A673 (cell line): ENCODE measurements at regions of chr11 and their contacts with region 1.

Region 1: DNA sequence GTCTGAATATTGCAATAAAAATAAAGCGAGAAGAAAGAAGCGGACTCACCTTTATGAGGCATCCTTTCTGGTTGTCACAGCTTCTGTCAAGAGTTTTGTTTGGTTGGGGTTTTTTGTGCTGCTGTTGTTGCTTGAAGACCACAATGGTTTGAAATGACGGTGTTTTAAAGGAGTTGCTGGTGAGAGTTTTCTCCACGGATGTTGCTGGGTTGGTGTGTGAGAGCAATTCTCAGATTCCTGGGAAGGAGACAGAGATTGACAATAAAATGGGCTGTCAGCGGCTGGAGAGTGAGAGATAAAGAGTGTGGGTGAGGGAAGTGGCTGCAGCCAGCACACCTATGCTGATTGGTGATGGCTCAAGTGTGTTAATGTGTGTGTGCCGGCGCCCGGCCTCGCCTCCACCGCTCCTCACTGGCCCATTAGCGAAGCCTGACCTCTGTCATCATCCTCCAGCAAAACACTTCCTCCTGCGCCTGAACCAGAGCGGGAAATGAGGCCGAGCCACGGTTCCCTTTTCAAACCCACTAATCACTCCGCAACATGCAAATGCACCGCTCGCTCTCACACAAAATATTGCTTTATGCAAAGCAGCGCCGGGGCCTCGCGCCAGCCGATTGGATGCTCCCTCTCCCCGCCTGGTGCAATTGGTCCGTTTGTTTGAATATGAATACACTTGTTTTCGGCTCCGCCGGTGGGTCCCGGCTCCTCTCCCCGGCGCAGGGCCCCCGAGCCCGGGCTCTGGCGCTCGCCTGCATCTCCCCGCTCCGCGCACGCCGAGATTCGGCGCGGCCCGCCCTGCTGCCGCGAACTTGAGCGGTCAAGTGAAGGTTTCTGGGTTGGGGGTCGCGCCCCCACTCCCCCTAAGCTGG is at the start of gene PAX6:
- DNase-seq: peak; percentile 100
- H3K4me3 ChIP-seq: peak within 1 kb of the TSS; percentile 60
- H3K27ac ChIP-seq: peak within 1 kb of the TSS; percentile 79
- H3K4me1 ChIP-seq: peaks cover 67% of the 10 kb centered on the region
- H3K27me3 ChIP-seq: peaks cover 94% of the 10 kb centered on the region
- CTCF ChIP-seq: no peak
- total RNA-seq, gene PAX6: 22.4 and 33.9 TPM in 2 replicates

Region 2: DNA sequence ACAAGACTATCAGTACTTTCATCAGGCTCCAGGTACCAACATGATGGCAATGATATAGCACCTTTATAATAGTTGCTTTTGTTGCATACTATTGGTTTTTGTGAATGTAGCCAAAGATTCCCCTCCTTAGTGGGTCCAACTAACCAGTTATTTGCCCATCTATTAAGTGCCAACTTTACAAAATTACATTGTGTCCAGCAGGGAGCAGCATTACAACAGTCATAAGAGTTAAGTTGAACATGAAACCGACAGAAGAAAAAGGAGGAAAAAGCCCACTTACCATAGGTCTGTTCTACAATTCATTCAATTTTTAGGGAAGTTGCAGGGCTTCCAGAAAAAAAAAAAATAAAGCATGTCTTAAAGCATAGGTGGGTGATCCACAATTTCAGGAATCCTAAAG is 323.2 kb before region 1 on chr11:
- CTCF ChIA-PET with region 1: no interaction called
- POLR2A ChIA-PET with region 1: no interaction called
- intact Hi-C with region 1: loop called (anchors 5 kb)
- DNase-seq: peak; percentile 91
- H3K4me3 ChIP-seq: no peak overlapping the region
- H3K27ac ChIP-seq: no peak overlapping the region
- H3K4me1 ChIP-seq: peaks cover 6% of the 10 kb centered on the region
- H3K27me3 ChIP-seq: no peaks in the 10 kb centered on the region
- CTCF ChIP-seq: peak; percentile 92

Region 3: DNA sequence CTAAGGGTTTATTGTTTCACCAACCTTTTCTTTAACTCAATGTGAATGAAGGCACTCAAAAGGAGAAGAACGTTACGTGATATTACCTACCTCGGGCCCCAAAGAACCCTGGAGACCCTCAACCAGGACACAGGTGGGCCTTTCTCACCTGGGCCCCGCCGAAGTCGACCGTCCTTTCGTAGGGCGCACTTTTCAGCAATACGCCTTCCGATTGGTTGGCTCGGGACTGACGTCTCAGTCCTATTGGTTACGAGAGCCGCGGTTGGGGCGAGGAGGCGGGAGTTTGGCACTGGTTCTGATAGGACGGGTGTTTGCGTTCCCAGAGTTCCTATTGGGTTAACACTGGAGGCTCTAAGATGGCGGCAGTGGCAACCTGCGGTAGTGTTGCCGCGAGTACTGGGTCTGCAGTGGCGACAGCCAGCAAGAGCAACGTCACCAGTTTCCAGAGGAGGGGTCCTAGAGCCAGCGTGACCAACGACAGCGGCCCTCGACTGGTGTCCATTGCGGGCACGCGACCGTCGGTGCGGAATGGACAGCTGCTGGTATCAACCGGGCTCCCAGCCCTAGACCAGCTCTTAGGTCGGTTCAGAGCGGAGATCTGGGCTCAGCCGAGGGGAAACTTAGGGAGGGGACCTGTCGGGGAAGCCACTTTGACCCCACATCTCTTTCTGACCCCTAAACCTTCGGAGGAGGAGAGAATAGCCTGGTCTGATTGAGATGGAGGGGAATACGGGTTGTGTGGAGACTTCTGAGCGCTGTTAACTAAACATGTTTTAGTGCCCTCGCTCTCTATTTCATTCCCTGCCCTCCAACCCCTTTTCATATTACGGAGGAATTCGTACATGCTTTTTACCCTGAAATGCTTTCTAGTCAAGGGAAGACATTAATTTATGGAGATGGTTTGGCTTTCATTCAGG is 301.3 kb before region 1 on chr11 and contains the starts of genes ELP4 and IMMP1L:
- CTCF ChIA-PET with region 1: no interaction called
- POLR2A ChIA-PET with region 1: no interaction called
- intact Hi-C with region 1: loop called (anchors 2 kb)
- DNase-seq: peak; percentile 100
- H3K4me3 ChIP-seq: peak within 1 kb of the TSS; percentile 61
- H3K27ac ChIP-seq: peak within 1 kb of the TSS; percentile 82
- H3K4me1 ChIP-seq: peaks cover 24% of the 10 kb centered on the region
- H3K27me3 ChIP-seq: no peaks in the 10 kb centered on the region
- CTCF ChIP-seq: no peak
- total RNA-seq, gene ELP4: 49.4 and 49.7 TPM in 2 replicates
- total RNA-seq, gene IMMP1L: 88.3 and 97.3 TPM in 2 replicates

Region 4: DNA sequence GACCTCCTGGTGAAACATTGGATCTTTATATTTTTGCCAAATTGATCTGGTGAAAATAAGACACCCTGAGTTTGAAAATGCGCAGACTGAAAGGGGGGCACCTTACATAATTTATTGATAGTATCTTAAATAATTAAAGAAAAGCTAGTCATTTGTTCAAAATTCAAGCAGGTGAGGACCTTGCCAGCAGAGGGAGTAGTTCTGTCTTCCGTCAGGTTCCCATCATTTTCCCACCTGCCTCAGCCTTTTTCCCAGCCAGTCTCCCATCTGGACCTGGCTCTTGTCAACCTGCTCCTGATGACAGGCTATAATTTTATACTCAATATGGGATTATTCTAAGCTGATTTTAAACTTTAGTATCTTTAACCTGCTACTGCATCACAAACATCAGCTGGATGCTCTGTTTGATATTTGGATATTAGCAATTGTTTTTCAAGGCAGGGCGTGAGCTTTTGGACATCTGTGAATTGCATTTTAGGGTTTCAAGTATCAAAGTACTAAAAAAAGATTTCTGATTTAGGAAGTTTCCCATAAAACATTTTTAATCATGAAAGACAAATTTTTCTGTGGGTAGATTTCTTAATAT is 169.4 kb before region 1 on chr11:
- CTCF ChIA-PET with region 1: interaction called, 4 read pairs
- POLR2A ChIA-PET with region 1: no interaction called
- intact Hi-C with region 1: loop called (anchors 5 kb)
- DNase-seq: peak; percentile 74
- H3K4me3 ChIP-seq: no peak overlapping the region
- H3K27ac ChIP-seq: no peak overlapping the region
- H3K4me1 ChIP-seq: peaks cover 11% of the 10 kb centered on the region
- H3K27me3 ChIP-seq: no peaks in the 10 kb centered on the region
- CTCF ChIP-seq: peak; percentile 99

Region 5: DNA sequence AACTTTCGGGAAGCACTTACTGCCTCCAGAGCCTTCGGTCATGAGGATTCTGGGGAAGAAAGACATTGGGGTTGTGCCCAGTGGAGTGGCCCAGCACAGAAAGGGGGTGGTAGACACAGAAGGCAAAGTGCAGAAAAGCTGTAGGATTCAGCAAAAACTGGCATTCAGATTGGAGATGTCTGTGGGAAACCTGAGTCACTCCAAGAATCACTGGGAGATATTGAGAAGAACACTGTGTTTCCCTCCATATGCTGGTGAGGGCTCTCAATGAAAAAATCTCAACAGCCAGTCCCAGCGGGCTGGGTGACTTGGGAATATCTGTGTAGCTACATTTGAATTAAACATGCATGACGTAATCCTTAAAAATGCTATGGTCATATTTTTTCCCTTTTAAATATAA is 218.7 kb after region 1 on chr11:
- CTCF ChIA-PET with region 1: no interaction called
- POLR2A ChIA-PET with region 1: no interaction called
- intact Hi-C with region 1: no loop called
- DNase-seq: peak; percentile 63
- H3K4me3 ChIP-seq: no peak overlapping the region
- H3K27ac ChIP-seq: no peak overlapping the region
- H3K4me1 ChIP-seq: peaks cover 13% of the 10 kb centered on the region
- H3K27me3 ChIP-seq: peaks cover 58% of the 10 kb centered on the region
- CTCF ChIP-seq: no peak

Region 6: DNA sequence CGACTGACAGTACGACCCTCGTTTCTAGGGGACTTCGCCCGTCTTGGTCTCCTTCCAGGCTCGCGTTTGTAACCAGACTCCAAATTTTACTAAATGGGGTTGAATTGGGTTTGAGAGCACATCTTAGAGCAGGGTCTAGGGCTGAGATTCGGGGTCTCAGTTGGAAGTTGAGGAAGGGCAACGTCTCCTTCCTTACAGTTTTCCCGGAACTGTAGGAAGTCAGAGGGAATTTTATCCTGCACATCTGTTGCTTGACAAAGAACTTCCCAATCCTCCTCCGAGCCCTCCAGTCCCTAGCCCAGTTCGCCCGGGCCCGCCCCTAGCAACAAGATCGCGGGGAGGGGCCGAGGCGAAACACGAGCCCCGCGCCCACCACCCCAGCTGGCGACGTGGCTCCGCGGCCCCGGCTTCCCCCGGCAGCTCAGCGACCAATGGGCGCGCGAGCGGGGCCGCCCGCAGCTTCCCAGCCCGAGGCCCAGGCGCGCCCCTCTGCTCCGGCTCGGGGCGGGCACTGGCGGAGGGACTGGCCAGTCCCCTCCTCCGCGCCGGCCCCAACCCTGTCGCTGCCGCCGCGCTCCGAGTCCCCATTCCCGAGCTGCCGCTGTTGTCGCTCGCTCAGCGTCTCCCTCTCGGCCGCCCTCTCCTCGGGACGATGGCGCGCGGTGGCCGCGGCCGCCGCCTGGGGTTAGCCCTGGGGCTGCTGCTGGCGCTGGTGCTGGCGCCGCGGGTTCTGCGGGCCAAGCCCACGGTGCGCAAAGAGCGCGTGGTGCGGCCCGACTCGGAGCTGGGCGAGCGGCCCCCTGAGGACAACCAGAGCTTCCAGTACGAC is 279.7 kb after region 1 on chr11 and contains the start of gene RCN1:
- CTCF ChIA-PET with region 1: no interaction called
- POLR2A ChIA-PET with region 1: no interaction called
- intact Hi-C with region 1: loop called (anchors 5 kb)
- DNase-seq: peak; percentile 98
- H3K4me3 ChIP-seq: peak within 1 kb of the TSS; percentile 66
- H3K27ac ChIP-seq: peak within 1 kb of the TSS; percentile 94
- H3K4me1 ChIP-seq: peaks cover 40% of the 10 kb centered on the region
- H3K27me3 ChIP-seq: no peaks in the 10 kb centered on the region
- CTCF ChIP-seq: no peak
- total RNA-seq, gene RCN1: 412 and 413 TPM in 2 replicates